Activated CD4-positive, alpha-beta T cell treated with anti-CD3 and anti-CD28 coated beads, Interleukin-2, amount 10 ng/mL, durations not matched to agents 24 days and 14 days (primary cell): ENCODE measurements at regions of chrX and their contacts with region 1.

Region 1: DNA sequence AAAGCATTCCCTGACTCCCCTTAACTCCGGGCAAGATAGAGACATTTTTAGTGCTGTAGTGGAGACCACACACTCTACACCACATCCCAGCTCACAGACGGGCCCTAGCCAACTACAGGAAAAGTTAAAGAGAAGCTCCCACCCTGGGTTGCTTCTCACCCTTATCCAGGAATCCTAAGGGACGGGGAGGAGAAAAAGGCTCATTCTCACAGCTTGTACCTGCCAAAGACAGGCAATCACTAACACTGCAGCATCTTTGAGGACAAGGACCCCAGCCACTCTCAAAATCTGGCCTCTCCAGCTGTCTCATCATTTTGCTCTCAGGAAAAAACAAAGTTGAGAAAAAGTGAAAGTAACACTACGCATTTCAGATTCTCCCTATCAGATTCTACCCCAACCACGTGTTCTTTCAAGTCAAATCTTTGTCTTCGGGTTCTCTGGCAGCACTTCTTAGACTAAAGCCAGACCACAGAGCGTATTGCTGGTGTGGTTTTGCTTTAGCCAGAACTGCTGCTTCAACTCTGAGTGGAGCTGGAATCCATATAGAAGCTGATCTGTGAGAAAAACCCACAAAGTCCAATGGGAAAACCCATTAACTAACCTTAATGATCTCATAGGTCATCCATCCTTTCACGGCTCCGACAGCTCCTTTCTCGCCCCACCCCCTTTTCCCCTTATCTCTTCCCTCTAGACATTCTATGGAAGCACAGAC is 605.9 kb upstream of the DIPK2B start:
- DNase-seq: peak; percentile 87
- H3K4me3 Mint-ChIP-seq: peak overlapping the region; percentile 80
- H3K27ac Mint-ChIP-seq: peak overlapping the region; percentile 88
- H3K4me1 Mint-ChIP-seq: peaks cover 72% of the 10 kb centered on the region
- H3K27me3 Mint-ChIP-seq: no peaks in the 10 kb centered on the region

Region 2: GRCh38 chrX:45621376-45622041 is 185.1 kb before region 1 on chrX:
- intact Hi-C with region 1: loop called (anchors 2 kb)
- DNase-seq: peak; percentile 51
- H3K4me3 Mint-ChIP-seq: peak overlapping the region; percentile 35
- H3K27ac Mint-ChIP-seq: peak overlapping the region; percentile 89
- H3K4me1 Mint-ChIP-seq: peaks cover 18% of the 10 kb centered on the region
- H3K27me3 Mint-ChIP-seq: no peaks in the 10 kb centered on the region

Region 3: DNA sequence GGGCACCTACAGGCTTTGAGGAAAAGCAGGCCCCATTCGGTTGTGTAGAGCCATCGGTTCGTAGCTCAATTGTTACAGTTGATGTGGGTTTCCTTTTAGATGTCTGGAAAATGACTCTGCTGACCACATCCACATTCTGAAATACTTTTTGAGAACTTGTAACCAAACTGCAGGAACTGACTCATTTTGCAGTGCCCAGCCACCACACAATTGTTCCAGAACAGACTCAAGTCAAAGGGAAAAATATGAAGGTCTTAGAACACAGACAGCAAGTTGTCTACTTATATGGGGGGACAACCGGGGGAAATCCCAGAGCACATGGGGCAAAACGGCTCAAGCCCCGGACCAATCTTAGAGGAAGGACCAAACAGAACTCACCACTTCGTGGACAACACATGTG is 48.2 kb before region 1 on chrX:
- intact Hi-C with region 1: loop called (anchors 1 kb)
- DNase-seq: peak; percentile 84
- H3K4me3 Mint-ChIP-seq: peak overlapping the region; percentile 82
- H3K27ac Mint-ChIP-seq: peak overlapping the region; percentile 99
- H3K4me1 Mint-ChIP-seq: peaks cover 62% of the 10 kb centered on the region
- H3K27me3 Mint-ChIP-seq: no peaks in the 10 kb centered on the region

Region 4: GRCh38 chrX:45781901-45782553 is 24.5 kb before region 1 on chrX:
- intact Hi-C with region 1: loop called (anchors 2 kb)
- DNase-seq: no peak
- H3K4me3 Mint-ChIP-seq: no peak overlapping the region
- H3K27ac Mint-ChIP-seq: peak overlapping the region; percentile 62
- H3K4me1 Mint-ChIP-seq: peaks cover 57% of the 10 kb centered on the region
- H3K27me3 Mint-ChIP-seq: no peaks in the 10 kb centered on the region

Region 5: DNA sequence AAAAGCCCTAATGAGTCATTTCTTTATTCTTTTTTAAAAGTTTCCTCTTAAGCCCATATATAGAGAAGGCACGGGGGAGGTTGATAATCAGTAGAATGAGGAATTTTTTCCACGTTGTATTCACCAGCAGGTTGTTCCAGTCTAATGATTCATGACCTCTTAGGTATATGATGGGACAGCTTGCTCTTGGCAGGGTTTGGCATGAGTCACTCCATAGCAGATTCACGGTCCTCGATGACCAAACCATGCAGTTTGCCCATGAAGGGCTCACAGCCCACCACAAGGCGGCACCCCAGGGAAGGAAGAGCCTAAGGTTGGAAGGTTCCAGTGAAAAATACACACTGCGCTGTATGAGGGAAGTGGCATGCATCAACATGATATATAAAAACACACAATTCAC is 17.9 kb after region 1 on chrX:
- intact Hi-C with region 1: loop called (anchors 1 kb)
- DNase-seq: no peak
- H3K4me3 Mint-ChIP-seq: peak overlapping the region; percentile 3
- H3K27ac Mint-ChIP-seq: peak overlapping the region; percentile 82
- H3K4me1 Mint-ChIP-seq: peaks cover 18% of the 10 kb centered on the region
- H3K27me3 Mint-ChIP-seq: no peaks in the 10 kb centered on the region

Region 6: DNA sequence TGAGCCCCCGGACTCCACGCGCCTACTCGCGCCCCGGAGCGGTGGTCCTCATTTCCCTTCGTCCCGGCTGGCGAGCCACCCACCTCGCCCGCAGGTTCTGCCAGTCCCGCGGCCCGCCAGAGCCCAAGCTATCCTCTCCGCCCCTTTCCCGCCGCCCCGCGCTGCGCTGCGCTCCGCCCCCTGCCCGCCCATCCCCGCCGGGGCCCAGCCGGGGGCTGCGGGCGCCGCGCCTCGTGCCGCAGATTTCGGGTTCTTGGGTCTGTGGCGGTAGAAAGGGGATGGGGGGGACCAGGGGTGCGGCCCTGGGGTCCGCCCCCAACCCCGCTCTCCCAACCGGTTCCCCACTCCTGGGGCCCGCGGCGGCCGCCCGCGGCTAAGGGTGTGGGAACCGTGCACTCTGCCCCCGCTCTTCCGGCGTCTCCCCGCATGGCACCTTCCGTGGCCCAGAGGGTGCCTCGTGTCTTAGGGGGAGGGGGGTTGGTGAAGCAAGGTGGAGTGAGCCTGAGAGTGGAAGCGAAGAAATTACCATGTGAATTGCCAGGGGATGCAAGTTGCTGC is 44.9 kb after region 1 on chrX:
- intact Hi-C with region 1: loop called (anchors 2 kb)
- DNase-seq: peak; percentile 85
- H3K4me3 Mint-ChIP-seq: peak overlapping the region; percentile 100
- H3K27ac Mint-ChIP-seq: peak overlapping the region; percentile 94
- H3K4me1 Mint-ChIP-seq: peaks cover 26% of the 10 kb centered on the region
- H3K27me3 Mint-ChIP-seq: no peaks in the 10 kb centered on the region